Heart right ventricle (tissue), 16 donors: ENCODE measurements at regions of chr3 and their contacts with region 1.

Region 1: DNA sequence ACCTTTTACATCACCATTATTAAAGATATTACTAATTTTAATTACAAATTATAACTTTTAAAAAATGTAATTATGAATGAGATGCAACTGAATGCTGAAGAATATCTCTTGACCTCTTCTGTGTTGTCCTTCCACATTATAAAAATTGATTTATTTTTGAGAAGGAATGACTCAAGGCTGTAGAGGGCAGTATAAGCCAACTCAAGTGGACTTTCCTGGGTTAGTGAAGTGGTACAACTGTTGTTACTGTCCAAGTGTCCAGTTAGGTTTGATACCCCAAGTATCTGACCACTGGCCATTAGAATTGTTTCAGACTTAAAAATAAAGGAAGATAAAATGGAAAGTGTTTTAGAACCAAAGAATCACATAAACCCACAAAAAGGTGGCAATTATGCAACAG is 51.9 kb downstream of the BBX start:
- DNase-seq: peak in 1 of 2 donors; percentile 32
- ATAC-seq: peak in 6 of 8 donors; percentile 51 to 79 (median 70)
- H3K4me3 ChIP-seq: no peak overlapping the region
- H3K27ac ChIP-seq: no peak overlapping the region
- H3K4me1 ChIP-seq: peaks cover 0 to 14% (median 4%) of the 10 kb centered on the region in 9 donors
- H3K27me3 ChIP-seq: no peaks in the 10 kb centered on the region
- CTCF ChIP-seq: peak; percentile 37 to 77 (median 66)

Region 2: DNA sequence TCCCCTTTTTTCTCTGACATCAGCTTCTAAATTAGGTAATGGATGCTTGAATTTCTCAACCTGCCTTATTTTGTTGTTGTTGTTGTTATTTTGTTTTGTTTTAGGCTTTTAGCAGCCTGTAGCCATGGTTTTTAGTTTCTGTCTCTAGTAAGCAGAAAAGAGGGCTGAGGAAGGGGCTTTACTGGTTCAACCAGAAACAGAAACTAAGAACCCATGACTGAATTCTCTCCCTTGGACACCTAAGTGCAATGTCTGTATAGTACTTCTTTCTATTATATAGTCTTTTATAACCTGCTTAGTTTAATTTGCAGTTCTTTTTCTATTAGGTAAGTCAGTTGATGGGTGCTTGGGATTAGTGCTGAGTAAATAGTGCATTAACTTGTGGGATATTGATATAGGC is 77.1 kb after region 1 on chr3:
- intact Hi-C with region 1: loop called in 2 of 10 experiments (anchors 5 to 10 kb)
- DNase-seq: no peak
- ATAC-seq: no peak
- H3K4me3 ChIP-seq: no peak overlapping the region
- H3K27ac ChIP-seq: no peak overlapping the region
- H3K4me1 ChIP-seq: peaks cover 0 to 15% (median 0%) of the 10 kb centered on the region in 9 donors
- H3K27me3 ChIP-seq: no peaks in the 10 kb centered on the region
- CTCF ChIP-seq: no peak

Region 3: GRCh38 chr3:107660306-107660976 is 85.8 kb after region 1 on chr3:
- intact Hi-C with region 1: loop called in 5 of 10 experiments (anchors 5 to 10 kb)
- DNase-seq: no peak
- ATAC-seq: no peak
- H3K4me3 ChIP-seq: no peak overlapping the region
- H3K27ac ChIP-seq: no peak overlapping the region
- H3K4me1 ChIP-seq: peaks cover 0 to 37% (median 25%) of the 10 kb centered on the region in 9 donors
- H3K27me3 ChIP-seq: no peaks in the 10 kb centered on the region
- CTCF ChIP-seq: peak; percentile 9 to 73 (median 62)

Region 4: GRCh38 chr3:107740992-107741896 is 166.6 kb after region 1 on chr3:
- intact Hi-C with region 1: loop called (anchors 5 to 10 kb)
- DNase-seq: no peak
- ATAC-seq: no peak
- H3K4me3 ChIP-seq: no peak overlapping the region
- H3K27ac ChIP-seq: no peak overlapping the region
- H3K4me1 ChIP-seq: peaks cover 0 to 4% (median 0%) of the 10 kb centered on the region in 9 donors
- H3K27me3 ChIP-seq: no peaks in the 10 kb centered on the region
- CTCF ChIP-seq: peak; percentile 39 to 78 (median 62)

Region 5: GRCh38 chr3:107846279-107846852 is 271.7 kb after region 1 on chr3:
- intact Hi-C with region 1: loop called in 1 of 10 experiments (anchors 2 kb)
- DNase-seq: peak; percentile 57 to 70
- ATAC-seq: peak; percentile 51 to 88 (median 72)
- H3K4me3 ChIP-seq: no peak overlapping the region
- H3K27ac ChIP-seq: no peak overlapping the region
- H3K4me1 ChIP-seq: peaks cover 0 to 8% (median 0%) of the 10 kb centered on the region in 9 donors
- H3K27me3 ChIP-seq: no peaks in the 10 kb centered on the region
- CTCF ChIP-seq: peak in 8 of 9 donors; percentile 20 to 71 (median 64)

Region 6: DNA sequence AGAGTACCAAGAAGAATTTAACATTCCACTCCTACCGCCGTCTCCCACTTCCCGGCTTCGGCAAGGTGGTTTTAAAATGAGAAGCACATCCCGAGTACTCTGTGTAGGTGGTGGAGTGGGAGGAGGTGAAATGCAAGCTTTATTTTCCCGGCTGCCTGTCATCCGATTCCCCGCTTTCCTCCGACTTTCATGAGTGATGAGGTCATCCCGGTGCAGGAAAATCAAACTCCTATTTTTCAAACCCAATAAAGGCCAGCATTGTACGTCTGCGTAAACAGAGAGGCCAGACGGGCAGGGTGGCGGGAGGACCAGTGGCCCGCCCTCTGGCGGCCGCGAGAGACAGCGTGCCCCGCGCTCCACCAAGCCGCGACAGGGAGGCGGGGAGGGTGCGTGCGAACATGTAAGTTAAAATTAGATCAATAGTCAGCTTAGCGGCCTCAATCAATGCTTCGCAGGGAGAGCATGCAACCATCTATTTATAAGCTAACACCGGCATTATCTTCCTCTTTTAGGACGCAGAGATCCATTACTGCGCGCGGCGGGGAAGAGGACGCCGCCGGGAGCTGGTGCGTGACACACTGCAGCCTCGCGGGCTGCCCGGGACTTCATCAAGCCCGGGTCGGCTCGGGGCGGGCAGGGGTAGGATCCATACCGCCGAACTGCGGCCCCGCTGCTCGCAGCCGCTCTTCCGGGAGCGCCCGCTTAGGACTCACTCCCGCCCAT is 352.9 kb after region 1 on chr3:
- intact Hi-C with region 1: loop called in 2 of 10 experiments (anchors 5 to 10 kb)
- DNase-seq: peak; percentile 43 to 73
- ATAC-seq: peak; percentile 95 to 99 (median 97)
- H3K4me3 ChIP-seq: peak overlapping the region; percentile 23 to 72 (median 58)
- H3K27ac ChIP-seq: peak overlapping the region in 1 of 10 donors; percentile 5
- H3K4me1 ChIP-seq: peaks cover 0 to 18% (median 8%) of the 10 kb centered on the region in 9 donors
- H3K27me3 ChIP-seq: peaks cover 0 to 21% (median 0%) of the 10 kb centered on the region in 7 donors
- CTCF ChIP-seq: peak; percentile 86 to 98 (median 93)